Naive thymus-derived CD4-positive, alpha-beta T cell (primary cell): ENCODE measurements at regions of chr19 and their contacts with region 1.

Region 1: GRCh38 chr19:55605207-55605636 is 225 bp upstream of the ZNF865 start:
- DNase-seq: peak; percentile 90 to 99 (median 97)
- ATAC-seq: peak; percentile 87
- H3K4me3 ChIP-seq: peak overlapping the region; percentile 51
- H3K4me3 Mint-ChIP-seq: peak overlapping the region; percentile 78 to 98 (median 90)
- H3K27ac ChIP-seq: peak overlapping the region; percentile 90
- H3K27ac Mint-ChIP-seq: peak overlapping the region; percentile 77 to 96 (median 91)
- H3K4me1 ChIP-seq: peaks cover 7 to 18% of the 10 kb centered on the region in 2 donors
- H3K4me1 Mint-ChIP-seq: peaks cover 37 to 70% (median 64%) of the 10 kb centered on the region in 7 donors
- H3K27me3 ChIP-seq: no peaks in the 10 kb centered on the region
- H3K27me3 Mint-ChIP-seq: peaks cover 0 to 3% (median 0%) of the 10 kb centered on the region in 5 donors

Region 2: DNA sequence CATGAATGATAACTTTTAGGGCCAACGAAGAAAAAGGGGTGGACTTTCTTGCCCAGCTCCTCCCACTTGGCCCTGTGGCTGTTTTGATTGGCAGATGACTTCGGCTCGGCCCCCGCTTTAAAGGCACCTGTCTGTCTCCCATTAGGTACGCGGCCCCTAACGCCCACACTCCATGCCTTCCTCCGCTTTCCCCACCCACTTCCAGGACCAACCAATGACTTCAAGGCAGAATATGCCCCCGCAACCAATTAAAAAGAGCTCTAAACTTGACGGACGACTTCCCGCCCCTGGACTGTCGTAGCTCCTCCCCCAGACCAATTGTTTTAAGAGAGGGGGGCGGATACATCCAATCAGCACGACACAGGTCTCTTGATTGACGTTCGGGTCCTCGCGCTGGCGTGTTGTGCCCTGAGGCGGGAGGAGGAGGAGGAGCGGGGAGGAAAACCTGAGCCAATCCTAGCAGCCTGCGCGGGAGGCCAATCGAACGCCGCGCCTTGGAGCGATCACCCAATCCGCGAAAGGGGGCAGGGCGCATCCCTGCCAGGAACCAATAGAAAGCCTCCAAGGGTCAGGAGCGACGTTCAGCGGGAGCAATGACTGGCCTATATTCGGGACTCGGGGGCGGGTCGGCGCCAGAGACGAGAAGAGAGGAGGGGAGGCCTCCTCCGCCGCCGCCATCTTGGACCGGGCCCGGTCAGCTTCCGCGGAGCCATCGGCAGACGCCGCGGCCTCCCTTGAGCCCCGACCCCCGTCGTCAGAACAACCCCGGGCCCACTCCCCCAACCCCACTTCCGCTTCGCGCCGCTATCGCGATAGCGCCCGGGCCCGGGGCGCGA is 1467.9 kb before region 1 on chr19 and contains the start of gene CNOT3:
- CTCF ChIA-PET with region 1: no interaction called
- POLR2A ChIA-PET with region 1: no interaction called
- intact Hi-C with region 1: loop called in 1 of 2 experiments (anchors 1 kb)
- DNase-seq: peak; percentile 90 to 100 (median 100)
- ATAC-seq: peak; percentile 88
- H3K4me3 ChIP-seq: peak within 1 kb of the TSS; percentile 66
- H3K4me3 Mint-ChIP-seq: peak within 1 kb of the TSS; percentile 87 to 98 (median 90)
- H3K27ac ChIP-seq: peak within 1 kb of the TSS; percentile 97
- H3K27ac Mint-ChIP-seq: peak within 1 kb of the TSS; percentile 85 to 94 (median 92)
- H3K4me1 ChIP-seq: peaks cover 19 to 30% of the 10 kb centered on the region in 2 donors
- H3K4me1 Mint-ChIP-seq: peaks cover 33 to 60% (median 46%) of the 10 kb centered on the region in 7 donors
- H3K27me3 ChIP-seq: no peaks in the 10 kb centered on the region
- H3K27me3 Mint-ChIP-seq: no peaks in the 10 kb centered on the region
- total RNA-seq, gene CNOT3: 38.0 to 84.6 (median 63.9) TPM

Region 3: GRCh38 chr19:55279770-55280643 is 325.2 kb before region 1 on chr19 and contains the start of gene HSPBP1:
- CTCF ChIA-PET with region 1: interaction called, 3 read pairs
- POLR2A ChIA-PET with region 1: no interaction called
- intact Hi-C with region 1: loop called in 1 of 2 experiments (anchors 1 kb)
- DNase-seq: peak; percentile 88 to 96 (median 96)
- ATAC-seq: peak; percentile 92
- H3K4me3 ChIP-seq: peak within 1 kb of the TSS; percentile 91
- H3K4me3 Mint-ChIP-seq: peak within 1 kb of the TSS; percentile 92 to 100 (median 98)
- H3K27ac ChIP-seq: peak within 1 kb of the TSS; percentile 89
- H3K27ac Mint-ChIP-seq: peak within 1 kb of the TSS; percentile 91 to 100 (median 98)
- H3K4me1 ChIP-seq: peaks cover 6 to 32% of the 10 kb centered on the region in 2 donors
- H3K4me1 Mint-ChIP-seq: peaks cover 12 to 52% (median 39%) of the 10 kb centered on the region in 7 donors
- H3K27me3 ChIP-seq: no peaks in the 10 kb centered on the region
- H3K27me3 Mint-ChIP-seq: peaks cover 0 to 9% (median 0%) of the 10 kb centered on the region in 5 donors
- total RNA-seq, gene HSPBP1: 15.0 to 30.0 (median 16.0) TPM

Region 4: DNA sequence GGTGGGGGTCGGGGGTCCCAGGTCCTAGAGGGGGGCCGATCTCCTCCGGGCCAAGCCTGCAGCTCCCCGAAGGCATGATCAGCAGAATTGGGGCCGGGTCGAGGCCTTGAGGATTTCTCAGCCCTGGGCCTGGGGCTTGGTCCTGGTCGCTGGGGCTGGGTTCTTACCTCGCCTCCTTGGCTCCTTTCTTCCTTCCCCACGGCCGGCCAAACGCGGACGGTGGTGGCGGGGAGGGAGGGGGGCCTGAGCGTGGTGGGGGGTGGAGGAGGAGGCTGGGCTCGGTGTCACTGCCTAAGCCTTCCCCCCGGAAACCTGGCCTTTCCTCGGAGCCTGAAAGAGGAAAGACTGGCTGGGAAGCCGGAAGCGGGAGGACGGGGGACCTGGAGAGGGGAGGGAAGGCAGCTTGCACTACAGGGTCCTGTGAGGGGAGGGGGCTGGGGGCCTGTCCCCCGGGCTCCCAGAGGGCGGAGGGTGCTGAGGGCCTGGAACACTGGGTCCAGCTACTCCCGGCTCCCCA is 24.5 kb before region 1 on chr19 and contains the start of gene ZNF579:
- CTCF ChIA-PET with region 1: interaction called, 5 read pairs
- POLR2A ChIA-PET with region 1: interaction called, 4 read pairs
- intact Hi-C with region 1: loop called (anchors 1 kb)
- DNase-seq: peak in 8 of 9 donors; percentile 50 to 82 (median 64)
- ATAC-seq: peak; percentile 86
- H3K4me3 ChIP-seq: peak within 1 kb of the TSS; percentile 82
- H3K4me3 Mint-ChIP-seq: peak within 1 kb of the TSS; percentile 85 to 92 (median 88)
- H3K27ac ChIP-seq: peak within 1 kb of the TSS; percentile 87
- H3K27ac Mint-ChIP-seq: peak within 1 kb of the TSS; percentile 76 to 96 (median 88)
- H3K4me1 ChIP-seq: peaks cover 8 to 16% of the 10 kb centered on the region in 2 donors
- H3K4me1 Mint-ChIP-seq: peaks cover 21 to 35% (median 29%) of the 10 kb centered on the region in 7 donors
- H3K27me3 ChIP-seq: no peaks in the 10 kb centered on the region
- H3K27me3 Mint-ChIP-seq: peaks cover 0 to 16% (median 0%) of the 10 kb centered on the region in 5 donors
- total RNA-seq, gene ZNF579: 6.1 to 11.0 (median 7.8) TPM

Region 5: GRCh38 chr19:55653758-55654539 is 48.7 kb after region 1 on chr19:
- CTCF ChIA-PET with region 1: interaction called, 3 read pairs
- POLR2A ChIA-PET with region 1: interaction called, 7 read pairs
- intact Hi-C with region 1: loop called in 1 of 2 experiments (anchors 1 kb)
- DNase-seq: peak; percentile 95 to 100 (median 100)
- ATAC-seq: peak; percentile 83
- H3K4me3 ChIP-seq: peak overlapping the region; percentile 98
- H3K4me3 Mint-ChIP-seq: peak overlapping the region; percentile 83 to 99 (median 96)
- H3K27ac ChIP-seq: peak overlapping the region; percentile 99
- H3K27ac Mint-ChIP-seq: peak overlapping the region; percentile 95 to 100 (median 99)
- H3K4me1 ChIP-seq: peaks cover 30 to 36% of the 10 kb centered on the region in 2 donors
- H3K4me1 Mint-ChIP-seq: peaks cover 29 to 55% (median 39%) of the 10 kb centered on the region in 7 donors
- H3K27me3 ChIP-seq: no peaks in the 10 kb centered on the region
- H3K27me3 Mint-ChIP-seq: peaks cover 0 to 2% (median 0%) of the 10 kb centered on the region in 5 donors

Region 6: DNA sequence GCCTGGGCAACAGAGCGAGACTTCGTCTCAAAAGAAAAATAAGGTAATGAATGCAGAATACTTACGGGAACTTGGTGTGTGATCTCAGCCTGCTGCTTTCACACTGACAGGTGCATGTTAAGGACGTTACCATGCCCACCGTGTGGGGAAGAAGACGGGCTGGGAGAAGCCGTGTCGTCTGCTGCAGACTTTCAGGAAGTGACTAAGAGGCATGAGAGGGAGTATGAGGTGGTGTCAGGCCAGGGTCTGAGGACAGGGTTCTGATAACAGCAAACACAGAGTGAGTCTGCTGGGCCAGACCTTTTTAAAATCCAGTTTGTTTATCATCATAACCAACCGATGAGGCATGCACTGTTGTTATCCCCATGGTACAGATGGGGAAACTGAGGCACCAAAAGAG is 557.0 kb after region 1 on chr19:
- CTCF ChIA-PET with region 1: no interaction called
- POLR2A ChIA-PET with region 1: no interaction called
- intact Hi-C with region 1: no loop called
- DNase-seq: no peak
- ATAC-seq: peak; percentile 51
- H3K4me3 ChIP-seq: no peak overlapping the region
- H3K4me3 Mint-ChIP-seq: no peak overlapping the region
- H3K27ac ChIP-seq: no peak overlapping the region
- H3K27ac Mint-ChIP-seq: peak overlapping the region in 1 of 9 donors; percentile 53
- H3K4me1 ChIP-seq: no peaks in the 10 kb centered on the region
- H3K4me1 Mint-ChIP-seq: peaks cover 4 to 9% (median 8%) of the 10 kb centered on the region in 7 donors
- H3K27me3 ChIP-seq: no peaks in the 10 kb centered on the region
- H3K27me3 Mint-ChIP-seq: peaks cover 0 to 15% (median 6%) of the 10 kb centered on the region in 5 donors